PC-3 (cell line): ENCODE measurements at regions of chr5 and their contacts with region 1.

Region 1: GRCh38 chr5:5141625-5142532 is 1.7 kb downstream of the ADAMTS16 start:
- DNase-seq: peak; percentile 75
- ATAC-seq: no peak
- H3K4me3 ChIP-seq: peak overlapping the region; percentile 62
- H3K27ac ChIP-seq: no peak overlapping the region
- H3K4me1 ChIP-seq: peaks cover 28% of the 10 kb centered on the region
- H3K27me3 ChIP-seq: peaks cover 26% of the 10 kb centered on the region
- CTCF ChIP-seq: peak; percentile 83

Region 2: GRCh38 chr5:4879693-4880303 is 262.1 kb before region 1 on chr5:
- CTCF ChIA-PET with region 1: no interaction called
- POLR2A ChIA-PET with region 1: no interaction called
- intact Hi-C with region 1: loop called (anchors 2 kb)
- DNase-seq: peak; percentile 88
- ATAC-seq: peak; percentile 86
- H3K4me3 ChIP-seq: no peak overlapping the region
- H3K27ac ChIP-seq: no peak overlapping the region
- H3K4me1 ChIP-seq: no peaks in the 10 kb centered on the region
- H3K27me3 ChIP-seq: peaks cover 64% of the 10 kb centered on the region
- CTCF ChIP-seq: peak; percentile 93

Region 3: GRCh38 chr5:4963265-4963664 is 178.6 kb before region 1 on chr5:
- CTCF ChIA-PET with region 1: no interaction called
- POLR2A ChIA-PET with region 1: no interaction called
- intact Hi-C with region 1: no loop called
- DNase-seq: no peak
- ATAC-seq: no peak
- H3K4me3 ChIP-seq: no peak overlapping the region
- H3K27ac ChIP-seq: no peak overlapping the region
- H3K4me1 ChIP-seq: no peaks in the 10 kb centered on the region
- H3K27me3 ChIP-seq: peaks cover 32% of the 10 kb centered on the region
- CTCF ChIP-seq: no peak

Region 4: GRCh38 chr5:5270958-5271605 is 129.2 kb after region 1 on chr5:
- CTCF ChIA-PET with region 1: no interaction called
- POLR2A ChIA-PET with region 1: no interaction called
- intact Hi-C with region 1: loop called (anchors 5 kb)
- DNase-seq: peak; percentile 96
- ATAC-seq: peak; percentile 100
- H3K4me3 ChIP-seq: peak overlapping the region; percentile 48
- H3K27ac ChIP-seq: peak overlapping the region; percentile 57
- H3K4me1 ChIP-seq: peaks cover 16% of the 10 kb centered on the region
- H3K27me3 ChIP-seq: no peaks in the 10 kb centered on the region
- CTCF ChIP-seq: peak; percentile 14; the same call in 1 of the 2 replicates

Region 5: GRCh38 chr5:5288201-5288600 is 146.3 kb after region 1 on chr5:
- CTCF ChIA-PET with region 1: no interaction called
- POLR2A ChIA-PET with region 1: no interaction called
- intact Hi-C with region 1: loop called (anchors 2 kb)
- DNase-seq: peak; percentile 95
- ATAC-seq: peak; percentile 93
- H3K4me3 ChIP-seq: peak overlapping the region; percentile 14; the same call in 1 of the 2 replicates
- H3K27ac ChIP-seq: peak overlapping the region; percentile 95
- H3K4me1 ChIP-seq: peaks cover 43% of the 10 kb centered on the region
- H3K27me3 ChIP-seq: no peaks in the 10 kb centered on the region
- CTCF ChIP-seq: no peak

Region 6: DNA sequence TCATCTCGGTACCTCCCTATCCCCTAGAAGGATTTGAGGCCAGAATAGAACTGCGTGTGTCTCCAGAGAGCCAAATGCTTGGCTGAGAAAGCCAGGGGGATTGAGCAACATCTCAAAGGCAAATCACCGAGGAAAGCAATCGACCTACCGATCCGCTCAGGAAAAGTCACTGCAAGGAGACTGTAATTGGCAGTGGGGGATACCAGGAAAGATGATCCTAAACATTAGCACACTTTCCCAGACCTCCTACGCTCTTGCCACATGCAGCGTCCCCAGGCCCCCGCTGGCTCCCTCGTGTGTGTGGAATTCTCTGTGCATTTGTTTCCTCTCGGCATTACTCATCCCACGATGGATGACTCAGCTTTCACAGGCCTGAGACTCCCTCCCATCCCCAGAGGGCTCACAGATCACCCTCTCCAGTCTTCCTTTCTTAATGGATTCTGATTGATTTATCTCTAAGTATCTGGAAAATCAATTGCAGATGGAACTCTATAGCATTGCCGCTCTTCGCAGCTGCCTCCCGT is 198.4 kb after region 1 on chr5:
- CTCF ChIA-PET with region 1: interaction called, 3 read pairs
- POLR2A ChIA-PET with region 1: no interaction called
- intact Hi-C with region 1: loop called (anchors 1 kb)
- DNase-seq: peak; percentile 95
- ATAC-seq: peak; percentile 73
- H3K4me3 ChIP-seq: no peak overlapping the region
- H3K27ac ChIP-seq: peak overlapping the region; percentile 69
- H3K4me1 ChIP-seq: peaks cover 57% of the 10 kb centered on the region
- H3K27me3 ChIP-seq: no peaks in the 10 kb centered on the region
- CTCF ChIP-seq: peak; percentile 76

Region 7: GRCh38 chr5:5398046-5398445 is 256.2 kb after region 1 on chr5:
- CTCF ChIA-PET with region 1: no interaction called
- POLR2A ChIA-PET with region 1: no interaction called
- intact Hi-C with region 1: loop called (anchors 1 kb)
- DNase-seq: peak; percentile 34
- ATAC-seq: 0 out of 2 replicates have a peak, but pooled peaks have one; percentile 20
- H3K4me3 ChIP-seq: no peak overlapping the region
- H3K27ac ChIP-seq: no peak overlapping the region
- H3K4me1 ChIP-seq: peaks cover 4% of the 10 kb centered on the region; the same call in 1 of the 2 replicates
- H3K27me3 ChIP-seq: no peaks in the 10 kb centered on the region
- CTCF ChIP-seq: no peak

Region 8: DNA sequence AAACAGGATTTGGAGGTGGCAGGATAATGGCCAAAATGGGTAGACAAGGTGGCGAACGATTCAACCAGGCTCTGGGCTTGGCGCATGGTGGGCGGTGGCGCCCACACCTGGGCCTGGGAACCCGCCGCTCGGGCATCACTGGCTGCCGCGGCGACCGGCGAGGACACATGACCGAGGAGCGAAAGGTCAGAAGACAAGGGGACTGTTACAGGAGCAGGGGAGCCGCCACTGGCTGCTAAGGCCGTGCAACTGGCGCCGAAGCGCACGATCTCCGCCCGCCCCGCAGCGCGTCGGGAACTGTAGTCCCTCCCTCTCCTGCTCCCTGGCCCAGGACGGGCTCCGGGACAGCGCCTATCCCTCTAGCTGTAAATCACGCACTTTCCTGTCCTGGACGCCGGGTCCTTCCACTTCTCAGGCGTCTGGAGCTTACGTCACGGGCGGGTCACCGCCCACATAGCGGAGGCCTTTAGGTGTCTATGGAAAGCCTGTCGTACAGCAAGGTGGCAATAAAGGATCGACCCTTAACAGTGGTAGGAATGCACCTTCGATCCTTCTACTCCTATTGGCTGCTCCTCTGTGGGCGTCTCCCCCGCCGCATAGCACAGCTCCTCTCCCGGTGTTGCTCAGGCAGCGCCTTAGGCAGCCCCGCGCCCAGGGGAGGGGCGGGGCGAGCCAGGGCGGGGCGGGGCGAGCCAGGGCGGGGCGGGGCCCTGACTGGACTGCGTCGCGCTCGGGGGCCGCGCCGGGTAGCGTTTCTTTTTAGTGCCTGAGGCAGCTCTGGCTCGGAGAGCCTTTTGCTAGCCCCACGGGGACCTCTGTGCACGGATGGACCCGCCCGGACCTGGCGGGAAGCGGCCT is 280.3 kb after region 1 on chr5 and contains the start of gene ICE1:
- CTCF ChIA-PET with region 1: no interaction called
- POLR2A ChIA-PET with region 1: no interaction called
- intact Hi-C with region 1: loop called (anchors 1 kb)
- DNase-seq: peak; percentile 98
- ATAC-seq: peak; percentile 93
- H3K4me3 ChIP-seq: peak within 1 kb of the TSS; percentile 98
- H3K27ac ChIP-seq: peak within 1 kb of the TSS; percentile 88
- H3K4me1 ChIP-seq: peaks cover 35% of the 10 kb centered on the region
- H3K27me3 ChIP-seq: no peaks in the 10 kb centered on the region
- CTCF ChIP-seq: no peak
- total RNA-seq, gene ICE1: 21.9 and 23.8 TPM in 2 replicates

Region 9: DNA sequence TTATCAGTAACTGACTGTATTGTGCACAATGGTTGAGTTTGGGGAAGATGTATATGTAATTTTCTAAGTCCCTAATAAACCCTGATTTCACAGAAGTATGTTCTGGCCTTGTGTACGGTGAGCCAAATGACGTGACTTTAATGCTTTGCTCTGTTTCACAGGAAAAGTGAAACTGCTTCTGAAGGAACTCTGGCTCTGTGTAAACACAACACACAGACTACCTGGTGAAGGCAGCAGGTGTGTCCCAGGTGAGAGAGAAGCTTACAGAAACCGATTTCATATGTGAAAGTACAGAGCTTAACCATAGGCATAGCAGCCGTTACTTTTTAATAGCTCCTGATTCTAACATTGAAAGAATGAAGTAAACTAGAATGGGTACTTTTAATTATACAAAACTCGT is 312.5 kb after region 1 on chr5:
- CTCF ChIA-PET with region 1: no interaction called
- POLR2A ChIA-PET with region 1: no interaction called
- intact Hi-C with region 1: no loop called
- DNase-seq: no peak
- ATAC-seq: no peak
- H3K4me3 ChIP-seq: no peak overlapping the region
- H3K27ac ChIP-seq: no peak overlapping the region
- H3K4me1 ChIP-seq: no peaks in the 10 kb centered on the region
- H3K27me3 ChIP-seq: no peaks in the 10 kb centered on the region
- CTCF ChIP-seq: no peak